ENCODE measurements at regions of chr13 and their contacts with region 1.

Region 1: DNA sequence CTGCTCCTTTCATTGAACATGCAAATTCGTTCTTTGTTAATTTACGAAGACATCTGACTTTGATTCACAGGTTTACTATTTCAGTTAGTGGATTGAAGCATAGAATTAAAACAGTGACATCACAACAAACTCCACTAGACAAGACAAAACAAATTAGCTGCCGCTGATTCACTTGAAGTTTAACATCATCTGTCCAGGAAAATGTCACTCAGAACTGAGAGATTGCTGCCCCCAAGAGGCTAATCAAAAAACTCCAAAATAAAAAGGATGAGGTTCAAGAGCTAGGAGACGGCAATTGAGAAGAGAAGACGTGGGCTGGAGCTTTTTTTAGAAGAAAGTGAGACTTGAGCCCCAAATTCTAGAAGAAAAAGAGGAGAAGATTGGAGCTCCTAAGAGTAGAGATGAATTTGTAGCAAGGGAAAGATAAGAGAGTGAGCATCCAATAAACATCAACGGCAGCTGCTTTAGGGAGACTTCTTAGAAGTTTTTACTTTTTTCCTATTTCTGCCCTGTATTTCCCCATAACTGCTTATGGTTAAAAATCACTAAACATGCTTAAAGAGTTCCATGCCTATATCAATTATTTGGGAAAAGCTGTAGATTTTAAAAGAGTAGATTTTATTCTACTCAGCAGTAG is 40.8 kb upstream of the TPP2 start:
- DNase-seq: peak; percentile 84
- H3K4me3 ChIP-seq: peak overlapping the region; percentile 31
- H3K27ac ChIP-seq: no peak overlapping the region
- H3K4me1 ChIP-seq: peaks cover 4% of the 10 kb centered on the region
- H3K27me3 ChIP-seq: no peaks in the 10 kb centered on the region
- CTCF ChIP-seq: peak; percentile 67

Region 2: GRCh38 chr13:101144808-101145419 is 1411.1 kb before region 1 on chr13:
- CTCF ChIA-PET with region 1: interaction called, 7 read pairs
- POLR2A ChIA-PET with region 1: no interaction called
- intact Hi-C with region 1: loop called (anchors 5 kb)
- DNase-seq: peak; percentile 75
- H3K4me3 ChIP-seq: no peak overlapping the region
- H3K27ac ChIP-seq: no peak overlapping the region
- H3K4me1 ChIP-seq: no peaks in the 10 kb centered on the region
- H3K27me3 ChIP-seq: no peaks in the 10 kb centered on the region
- CTCF ChIP-seq: peak; percentile 71

Region 3: GRCh38 chr13:101785858-101786257 is 770.2 kb before region 1 on chr13:
- CTCF ChIA-PET with region 1: interaction called, 4 read pairs
- POLR2A ChIA-PET with region 1: no interaction called
- intact Hi-C with region 1: loop called (anchors 10 kb)
- DNase-seq: peak; percentile 58
- H3K4me3 ChIP-seq: no peak overlapping the region
- H3K27ac ChIP-seq: no peak overlapping the region
- H3K4me1 ChIP-seq: no peaks in the 10 kb centered on the region
- H3K27me3 ChIP-seq: no peaks in the 10 kb centered on the region
- CTCF ChIP-seq: peak; percentile 51

Region 4: GRCh38 chr13:102197193-102197592 is 358.8 kb before region 1 on chr13:
- CTCF ChIA-PET with region 1: interaction called, 8 read pairs
- POLR2A ChIA-PET with region 1: no interaction called
- intact Hi-C with region 1: loop called (anchors 2 kb)
- DNase-seq: peak; percentile 78
- H3K4me3 ChIP-seq: no peak overlapping the region
- H3K27ac ChIP-seq: no peak overlapping the region
- H3K4me1 ChIP-seq: peaks cover 29% of the 10 kb centered on the region
- H3K27me3 ChIP-seq: no peaks in the 10 kb centered on the region
- CTCF ChIP-seq: peak; percentile 64

Region 5: DNA sequence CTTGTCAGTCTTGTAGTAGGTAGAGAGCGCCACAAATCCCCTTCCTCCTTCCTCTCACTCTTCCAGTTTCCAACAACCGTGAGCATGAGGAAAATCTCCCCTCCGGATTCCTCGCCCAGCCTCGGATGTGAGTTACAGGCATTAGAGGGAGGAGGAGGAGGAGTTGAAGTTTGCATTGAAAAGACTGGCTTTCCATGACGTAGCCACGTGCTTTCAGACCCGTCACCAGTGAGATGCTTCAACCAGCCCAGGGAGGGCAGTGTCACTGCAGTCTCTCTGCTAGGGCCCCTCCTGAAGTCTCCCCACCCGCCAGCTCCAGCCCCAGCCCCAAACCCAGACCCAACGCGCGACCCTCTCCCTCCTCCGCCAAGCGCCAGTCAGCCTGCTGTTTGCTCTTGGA is 153.7 kb before region 1 on chr13:
- CTCF ChIA-PET with region 1: no interaction called
- POLR2A ChIA-PET with region 1: no interaction called
- intact Hi-C with region 1: loop called (anchors 5 kb)
- DNase-seq: peak; percentile 95
- H3K4me3 ChIP-seq: peak overlapping the region; percentile 81
- H3K27ac ChIP-seq: peak overlapping the region; percentile 82
- H3K4me1 ChIP-seq: peaks cover 12% of the 10 kb centered on the region
- H3K27me3 ChIP-seq: no peaks in the 10 kb centered on the region
- CTCF ChIP-seq: peak; percentile 53

Region 6: GRCh38 chr13:103546271-103546670 is 990.2 kb after region 1 on chr13:
- CTCF ChIA-PET with region 1: no interaction called
- POLR2A ChIA-PET with region 1: no interaction called
- intact Hi-C with region 1: no loop called
- DNase-seq: no peak
- H3K4me3 ChIP-seq: no peak overlapping the region
- H3K27ac ChIP-seq: no peak overlapping the region
- H3K4me1 ChIP-seq: no peaks in the 10 kb centered on the region
- H3K27me3 ChIP-seq: no peaks in the 10 kb centered on the region
- CTCF ChIP-seq: no peak